Esophagus muscularis mucosa (tissue), 4 donors: ENCODE measurements at regions of chr5 and their contacts with region 1.

Region 1: DNA sequence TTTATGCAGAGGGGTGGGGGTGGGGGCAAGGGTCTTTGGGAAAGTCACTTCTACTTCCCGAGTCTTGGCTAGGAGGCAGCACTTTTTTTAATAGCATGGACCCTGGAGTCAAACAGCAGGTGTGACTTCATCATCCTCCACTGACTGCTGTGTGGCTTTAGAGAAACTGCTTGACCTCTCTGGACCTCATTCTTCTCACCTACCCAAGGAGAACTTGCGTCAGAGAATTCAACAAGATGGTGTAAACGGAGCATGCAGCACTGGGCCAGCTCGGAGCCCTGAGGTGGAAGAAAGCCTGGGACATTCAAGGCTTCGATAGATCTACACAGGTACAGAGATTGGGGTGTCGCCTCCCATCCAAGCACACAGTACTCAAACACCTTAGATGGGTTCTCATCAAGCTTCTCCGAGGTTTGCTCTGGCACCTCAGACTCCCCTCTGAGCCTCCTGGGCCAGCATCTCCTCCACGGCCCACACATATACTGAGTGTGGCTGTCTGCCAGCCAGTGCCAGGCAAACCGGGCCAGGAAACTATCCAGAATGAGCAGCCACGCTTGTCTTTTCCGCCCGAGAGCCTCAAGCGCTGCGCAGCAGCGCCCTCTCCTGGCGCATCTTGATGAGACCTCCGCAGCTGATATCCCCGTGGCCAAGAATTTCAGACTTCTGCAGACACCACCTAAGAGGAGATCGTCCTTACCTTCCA is 4.6 kb upstream of the SLC25A48 start:
- DNase-seq: peak; percentile 85
- H3K4me3 ChIP-seq: no peak overlapping the region
- H3K27ac ChIP-seq: no peak overlapping the region
- H3K4me1 ChIP-seq: peaks cover 5 to 18% (median 13%) of the 10 kb centered on the region in 4 donors
- H3K27me3 ChIP-seq: peaks cover 0 to 46% (median 0%) of the 10 kb centered on the region in 4 donors
- CTCF ChIP-seq: peak; percentile 59 to 75 (median 67)
- EP300 ChIP-seq: no peak
- POLR2A ChIP-seq: no peak

Region 2: GRCh38 chr5:135466178-135467050 is 363.4 kb before region 1 on chr5:
- intact Hi-C with region 1: loop called (anchors 10 kb)
- DNase-seq: no peak
- H3K4me3 ChIP-seq: peak overlapping the region; percentile 29 to 51 (median 37)
- H3K27ac ChIP-seq: no peak overlapping the region
- H3K4me1 ChIP-seq: peaks cover 0 to 13% (median 11%) of the 10 kb centered on the region in 4 donors
- H3K27me3 ChIP-seq: peaks cover 0 to 70% (median 0%) of the 10 kb centered on the region in 4 donors
- CTCF ChIP-seq: peak; percentile 81 to 91 (median 84)
- EP300 ChIP-seq: no peak
- POLR2A ChIP-seq: no peak

Region 3: GRCh38 chr5:135560858-135561257 is 269.0 kb before region 1 on chr5:
- intact Hi-C with region 1: loop called (anchors 2 kb)
- DNase-seq: no peak
- H3K4me3 ChIP-seq: no peak overlapping the region
- H3K27ac ChIP-seq: no peak overlapping the region
- H3K4me1 ChIP-seq: peaks cover 0 to 7% (median 1%) of the 10 kb centered on the region in 4 donors
- H3K27me3 ChIP-seq: peaks cover 0 to 45% (median 2%) of the 10 kb centered on the region in 4 donors
- CTCF ChIP-seq: peak; percentile 68 to 78 (median 69)
- EP300 ChIP-seq: no peak
- POLR2A ChIP-seq: no peak

Region 4: DNA sequence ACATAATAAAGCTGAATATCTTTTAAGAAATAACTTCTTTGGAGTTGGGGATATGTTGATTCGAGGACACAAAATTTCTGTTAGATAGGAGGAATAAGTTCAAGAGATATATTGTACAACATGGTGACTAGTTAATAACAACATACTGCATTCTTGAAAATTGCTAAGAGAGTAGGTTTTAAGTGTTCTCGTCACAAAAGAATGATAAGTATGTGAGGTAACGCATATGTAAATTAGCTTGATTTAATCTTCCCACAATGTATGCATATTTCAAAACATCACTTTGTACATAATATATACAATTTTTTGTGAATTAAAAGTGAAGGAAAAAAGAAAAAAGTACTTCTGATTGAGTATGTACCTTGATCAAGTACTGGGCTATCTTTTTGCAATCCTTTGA is 963.5 kb after region 1 on chr5:
- intact Hi-C with region 1: no loop called
- DNase-seq: no peak
- H3K4me3 ChIP-seq: no peak overlapping the region
- H3K27ac ChIP-seq: no peak overlapping the region
- H3K4me1 ChIP-seq: no peaks in the 10 kb centered on the region
- H3K27me3 ChIP-seq: peaks cover 0 to 7% (median 0%) of the 10 kb centered on the region in 4 donors
- CTCF ChIP-seq: no peak
- EP300 ChIP-seq: no peak
- POLR2A ChIP-seq: no peak